Breast epithelium (tissue), 4 donors: ENCODE measurements at regions of chr3 and their contacts with region 1.

Region 1: DNA sequence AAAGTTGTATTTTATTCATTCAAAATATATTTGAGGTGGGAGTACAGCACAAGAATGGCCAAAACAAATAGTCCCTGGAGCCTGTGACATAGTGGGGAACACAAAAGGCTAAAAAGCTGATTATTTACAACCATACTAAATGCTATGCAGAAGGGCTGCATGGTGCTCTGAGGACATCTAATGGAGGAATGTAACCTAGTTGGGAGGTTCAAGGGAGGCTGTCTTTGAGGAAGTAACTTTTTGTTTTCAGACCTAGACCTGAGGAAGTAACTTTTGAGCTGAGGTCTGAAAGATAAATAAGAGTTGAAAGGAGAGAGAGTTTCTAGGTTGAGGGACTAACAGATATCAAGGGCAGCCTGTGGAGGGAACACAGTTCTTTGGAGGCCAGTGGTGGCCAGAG is 34.8 kb upstream of the RASA2 start:
- DNase-seq: no peak
- H3K4me3 ChIP-seq: no peak overlapping the region
- H3K27ac ChIP-seq: peak overlapping the region; percentile 13 to 59
- H3K4me1 ChIP-seq: peaks cover 0 to 7% of the 10 kb centered on the region in 2 donors
- H3K27me3 ChIP-seq: no peaks in the 10 kb centered on the region
- CTCF ChIP-seq: peak in 2 of 3 donors; percentile 53 to 65
- POLR2A ChIP-seq: no peak

Region 2: DNA sequence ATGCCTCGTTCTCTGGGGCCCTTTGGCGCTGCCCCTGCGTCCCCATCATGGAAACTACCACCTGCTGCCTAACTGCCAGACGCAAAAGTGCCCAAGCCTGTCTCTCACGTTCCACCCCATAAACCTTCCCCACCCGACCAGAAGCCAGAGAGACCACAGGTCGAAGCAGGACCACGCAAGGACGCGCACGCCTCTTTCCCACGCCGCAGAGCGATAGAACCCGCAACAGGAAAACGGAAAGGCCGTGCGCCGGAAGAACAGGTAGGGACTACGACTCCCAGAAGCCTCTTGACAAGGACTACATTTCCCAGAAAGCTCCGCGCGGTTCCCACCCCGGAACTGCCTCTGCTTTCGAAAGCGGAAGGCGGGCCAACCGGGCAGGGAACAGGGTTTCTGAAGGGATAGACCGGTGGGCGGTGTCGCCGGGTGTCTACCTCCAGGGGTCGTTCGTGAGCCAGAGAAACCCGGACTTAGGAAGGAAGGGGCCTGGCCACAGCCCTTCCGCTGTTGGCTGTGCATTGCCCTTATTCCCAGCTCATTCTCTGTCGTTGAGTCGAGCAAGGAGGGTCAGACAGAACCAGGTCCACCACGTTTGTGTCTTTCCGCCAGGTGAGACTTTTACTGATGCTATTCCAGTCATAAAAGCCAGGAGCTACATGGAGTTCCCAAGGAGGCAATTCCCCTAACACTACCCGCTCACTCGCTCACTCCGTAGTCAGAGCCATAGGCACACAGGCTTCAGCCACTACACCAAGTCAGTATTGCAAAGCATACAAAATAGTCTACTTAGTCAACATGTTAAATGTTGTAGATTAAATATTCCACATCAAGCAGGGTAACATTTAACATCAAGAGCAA is 140.3 kb before region 1 on chr3:
- intact Hi-C with region 1: loop called (anchors 10 kb)
- DNase-seq: peak; percentile 98
- H3K4me3 ChIP-seq: peak overlapping the region; percentile 55 to 82 (median 66)
- H3K27ac ChIP-seq: peak overlapping the region; percentile 84 to 95
- H3K4me1 ChIP-seq: no peaks in the 10 kb centered on the region
- H3K27me3 ChIP-seq: no peaks in the 10 kb centered on the region
- CTCF ChIP-seq: peak; percentile 63 to 82 (median 70)
- POLR2A ChIP-seq: peak; percentile 63